Activated CD4-positive, alpha-beta memory T cell treated with anti-CD3 and anti-CD28 coated beads, Interleukin-2, amount 10 ng/mL, durations not matched to agents 7 days and 5 days (primary cell): ENCODE measurements at regions of chr2 and their contacts with region 1.

Region 1: GRCh38 chr2:207166039-207166348 is 246 bp upstream of the KLF7 start:
- DNase-seq: peak; percentile 98
- H3K4me3 Mint-ChIP-seq: peak overlapping the region; percentile 98
- H3K27ac Mint-ChIP-seq: peak overlapping the region; percentile 93
- H3K4me1 Mint-ChIP-seq: peaks cover 39% of the 10 kb centered on the region
- H3K27me3 Mint-ChIP-seq: peaks cover 9% of the 10 kb centered on the region

Region 2: DNA sequence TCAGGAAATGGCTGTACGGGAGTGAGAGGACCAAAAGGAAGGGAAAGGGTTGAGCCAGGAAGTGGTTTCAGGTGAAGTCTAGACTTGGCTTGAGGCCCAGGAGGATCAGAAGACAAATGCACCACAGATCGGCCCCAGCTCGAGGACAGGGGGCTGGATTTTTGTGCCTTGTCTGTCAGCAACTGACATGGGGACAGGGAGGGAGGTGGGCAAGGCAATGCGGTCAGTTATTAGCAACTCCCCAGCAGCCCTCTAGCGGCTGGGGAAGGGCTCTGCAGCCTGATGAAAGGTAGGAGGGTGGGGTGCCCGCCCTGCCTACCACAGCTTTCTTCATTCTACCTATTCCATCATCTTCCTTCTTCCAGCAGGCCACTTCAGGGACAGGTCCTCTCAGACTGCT is 176.7 kb before region 1 on chr2:
- CTCF ChIA-PET with region 1: no interaction called
- POLR2A ChIA-PET with region 1: no interaction called
- DNase-seq: no peak
- H3K4me3 Mint-ChIP-seq: no peak overlapping the region
- H3K27ac Mint-ChIP-seq: no peak overlapping the region
- H3K4me1 Mint-ChIP-seq: peaks cover 20% of the 10 kb centered on the region
- H3K27me3 Mint-ChIP-seq: no peaks in the 10 kb centered on the region

Region 3: DNA sequence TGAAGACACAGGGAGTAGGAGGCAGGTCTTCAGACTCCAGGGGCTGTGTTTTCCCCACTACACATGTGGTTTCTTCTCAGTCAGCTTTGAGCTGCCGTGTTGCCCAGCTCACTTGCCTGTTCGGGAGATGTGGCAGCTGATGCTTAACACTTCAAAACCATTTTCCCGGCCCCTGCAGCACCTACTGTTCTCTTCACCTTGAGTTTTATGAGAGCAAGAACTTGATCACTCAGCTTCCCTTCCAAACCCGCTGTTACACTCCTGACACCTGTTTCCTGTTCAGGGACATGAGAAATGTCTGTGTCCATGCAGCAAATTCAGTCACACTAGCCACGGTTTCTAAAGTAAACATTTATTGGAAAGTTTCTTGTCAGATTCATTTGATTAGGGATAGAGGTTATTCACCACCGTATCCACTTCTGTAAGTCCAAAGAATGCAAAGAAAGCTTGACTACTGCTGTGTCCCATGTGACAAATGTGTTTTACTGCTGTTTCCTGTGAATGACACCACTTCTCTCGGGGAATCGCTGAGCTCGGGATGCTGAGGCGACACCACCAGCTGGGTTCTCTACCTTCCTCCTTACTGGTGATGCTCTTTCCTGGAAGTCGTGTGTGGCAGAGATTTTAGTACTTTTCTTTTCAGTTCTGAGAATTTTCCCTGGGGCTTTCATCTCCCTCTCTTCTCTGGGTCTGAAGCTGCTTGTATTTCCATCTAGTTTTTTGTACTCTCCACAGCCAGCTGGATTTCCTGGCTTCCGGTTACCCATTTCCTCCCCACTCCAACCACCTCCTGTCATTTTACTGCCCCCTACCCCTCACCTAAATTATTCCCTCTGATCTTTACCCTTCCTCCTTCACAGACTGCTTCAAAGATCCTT is 92.0 kb before region 1 on chr2:
- CTCF ChIA-PET with region 1: interaction called, 15 read pairs
- POLR2A ChIA-PET with region 1: interaction called, 37 read pairs
- DNase-seq: peak; percentile 63
- H3K4me3 Mint-ChIP-seq: peak overlapping the region; percentile 15
- H3K27ac Mint-ChIP-seq: peak overlapping the region; percentile 65
- H3K4me1 Mint-ChIP-seq: peaks cover 32% of the 10 kb centered on the region
- H3K27me3 Mint-ChIP-seq: peaks cover 10% of the 10 kb centered on the region

Region 4: DNA sequence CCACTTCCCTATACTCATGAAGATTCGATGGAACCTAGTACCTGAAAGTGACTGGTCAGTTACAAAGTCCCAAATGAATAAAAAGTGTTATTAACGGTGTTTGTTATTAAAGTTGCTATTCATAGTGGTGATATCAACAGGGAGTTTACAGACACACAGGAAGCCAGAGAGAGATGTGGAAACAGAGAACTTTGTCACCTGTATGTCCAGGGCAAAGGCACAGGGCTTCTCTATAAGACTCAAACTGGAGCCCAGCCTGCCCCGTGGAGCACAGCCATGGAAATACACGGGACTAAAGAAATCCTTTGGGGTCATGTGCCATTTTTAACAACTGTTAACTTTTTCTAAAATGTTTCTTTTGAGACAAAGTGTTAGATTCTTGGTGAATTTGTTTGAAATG is 68.7 kb before region 1 on chr2:
- CTCF ChIA-PET with region 1: no interaction called
- POLR2A ChIA-PET with region 1: no interaction called
- DNase-seq: no peak
- H3K4me3 Mint-ChIP-seq: no peak overlapping the region
- H3K27ac Mint-ChIP-seq: no peak overlapping the region
- H3K4me1 Mint-ChIP-seq: peaks cover 2% of the 10 kb centered on the region
- H3K27me3 Mint-ChIP-seq: no peaks in the 10 kb centered on the region

Region 5: GRCh38 chr2:207149249-207150213 is 16.5 kb before region 1 on chr2:
- CTCF ChIA-PET with region 1: interaction called, 49 read pairs
- POLR2A ChIA-PET with region 1: interaction called, 276 read pairs
- DNase-seq: no peak
- H3K4me3 Mint-ChIP-seq: no peak overlapping the region
- H3K27ac Mint-ChIP-seq: no peak overlapping the region
- H3K4me1 Mint-ChIP-seq: peaks cover 69% of the 10 kb centered on the region
- H3K27me3 Mint-ChIP-seq: peaks cover 3% of the 10 kb centered on the region

Region 6: GRCh38 chr2:207283356-207283755 is 117.4 kb after region 1 on chr2:
- CTCF ChIA-PET with region 1: interaction called, 3 read pairs
- POLR2A ChIA-PET with region 1: interaction called, 15 read pairs
- DNase-seq: no peak
- H3K4me3 Mint-ChIP-seq: peak overlapping the region; percentile 49
- H3K27ac Mint-ChIP-seq: peak overlapping the region; percentile 19
- H3K4me1 Mint-ChIP-seq: peaks cover 55% of the 10 kb centered on the region
- H3K27me3 Mint-ChIP-seq: no peaks in the 10 kb centered on the region